ENCODE measurements at regions of chr7 and their contacts with region 1.

Region 1: DNA sequence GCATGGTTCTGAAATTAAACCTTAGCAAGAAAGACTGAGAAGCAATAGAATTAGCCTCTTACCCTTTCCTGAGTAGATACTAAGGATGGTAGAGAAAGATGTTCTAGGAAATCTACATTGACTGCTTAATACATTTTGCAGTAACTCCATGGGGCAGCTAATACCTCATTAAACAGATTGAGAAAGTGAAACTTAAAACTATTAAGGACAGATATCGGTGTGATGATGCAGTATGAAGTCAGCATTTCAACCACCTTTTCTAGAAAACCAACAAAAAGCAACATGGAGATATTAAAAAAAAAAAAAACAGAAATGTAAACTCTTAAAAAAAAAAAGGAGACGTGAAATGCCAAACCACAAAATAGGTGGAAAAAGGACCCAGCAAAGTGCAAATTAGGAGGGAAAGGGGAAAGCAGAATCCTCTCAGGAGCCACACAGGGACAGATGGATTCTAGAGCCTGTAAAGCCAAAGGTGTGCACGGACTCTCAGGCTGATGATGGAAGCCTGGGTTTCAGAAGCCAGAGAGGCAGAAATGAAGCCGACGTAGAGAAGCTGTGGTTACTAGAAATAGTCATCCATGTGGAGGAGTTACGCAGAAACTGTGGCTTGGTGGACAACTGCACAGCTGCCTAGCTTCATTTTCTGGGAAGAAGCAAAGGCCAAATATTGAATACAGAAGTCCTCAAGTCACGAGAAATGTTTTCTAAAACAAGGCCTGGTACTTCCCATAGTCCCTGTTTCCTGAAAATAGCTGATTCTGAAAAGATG is 38.1 kb upstream of the GPR141 start:
- H3K4me3 Mint-ChIP-seq: peak overlapping the region; percentile 64
- H3K27ac Mint-ChIP-seq: peak overlapping the region; percentile 93
- H3K4me1 Mint-ChIP-seq: peaks cover 29% of the 10 kb centered on the region
- H3K27me3 Mint-ChIP-seq: no peaks in the 10 kb centered on the region

Region 2: GRCh38 chr7:37541810-37542443 is 103.5 kb before region 1 on chr7:
- intact Hi-C with region 1: no loop called
- H3K4me3 Mint-ChIP-seq: no peak overlapping the region
- H3K27ac Mint-ChIP-seq: no peak overlapping the region
- H3K4me1 Mint-ChIP-seq: no peaks in the 10 kb centered on the region
- H3K27me3 Mint-ChIP-seq: peaks cover 3% of the 10 kb centered on the region

Region 3: GRCh38 chr7:37683246-37684120 is 38.0 kb after region 1 on chr7 and contains the start of gene GPR141:
- intact Hi-C with region 1: loop called (anchors 5 kb)
- H3K4me3 Mint-ChIP-seq: peak within 1 kb of the TSS; percentile 87
- H3K27ac Mint-ChIP-seq: peak within 1 kb of the TSS; percentile 87
- H3K4me1 Mint-ChIP-seq: peaks cover 47% of the 10 kb centered on the region
- H3K27me3 Mint-ChIP-seq: no peaks in the 10 kb centered on the region

Region 4: DNA sequence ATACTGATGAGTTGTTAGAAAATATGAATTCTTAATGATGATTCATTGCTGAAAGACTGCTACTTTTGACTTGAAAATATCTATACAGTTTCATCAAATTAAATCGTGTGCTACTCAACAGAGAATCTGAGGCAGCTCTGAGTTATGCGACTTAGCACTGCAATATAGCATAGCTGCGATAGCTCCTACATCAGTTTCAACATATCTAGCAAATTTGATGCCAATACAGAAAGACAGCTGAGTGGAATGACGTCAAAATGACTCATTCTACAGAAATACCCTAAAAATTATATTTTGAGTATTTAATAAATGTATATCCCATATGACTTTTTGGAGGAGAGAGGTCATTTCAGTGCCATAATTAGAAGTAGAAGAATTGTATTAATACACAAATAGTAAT is 629.0 kb after region 1 on chr7:
- intact Hi-C with region 1: no loop called
- H3K4me3 Mint-ChIP-seq: no peak overlapping the region
- H3K27ac Mint-ChIP-seq: no peak overlapping the region
- H3K4me1 Mint-ChIP-seq: peaks cover 24% of the 10 kb centered on the region
- H3K27me3 Mint-ChIP-seq: peaks cover 3% of the 10 kb centered on the region

Measured in dendritic cell treated with granulocyte-macrophage colony-stimulating factor and Interleukin-4, amounts not matched to agents 40 ng/mL and 50 ng/mL, for 4 days (primary cell).